ENCODE measurements at regions of chr5 and their contacts with region 1.

Region 1: DNA sequence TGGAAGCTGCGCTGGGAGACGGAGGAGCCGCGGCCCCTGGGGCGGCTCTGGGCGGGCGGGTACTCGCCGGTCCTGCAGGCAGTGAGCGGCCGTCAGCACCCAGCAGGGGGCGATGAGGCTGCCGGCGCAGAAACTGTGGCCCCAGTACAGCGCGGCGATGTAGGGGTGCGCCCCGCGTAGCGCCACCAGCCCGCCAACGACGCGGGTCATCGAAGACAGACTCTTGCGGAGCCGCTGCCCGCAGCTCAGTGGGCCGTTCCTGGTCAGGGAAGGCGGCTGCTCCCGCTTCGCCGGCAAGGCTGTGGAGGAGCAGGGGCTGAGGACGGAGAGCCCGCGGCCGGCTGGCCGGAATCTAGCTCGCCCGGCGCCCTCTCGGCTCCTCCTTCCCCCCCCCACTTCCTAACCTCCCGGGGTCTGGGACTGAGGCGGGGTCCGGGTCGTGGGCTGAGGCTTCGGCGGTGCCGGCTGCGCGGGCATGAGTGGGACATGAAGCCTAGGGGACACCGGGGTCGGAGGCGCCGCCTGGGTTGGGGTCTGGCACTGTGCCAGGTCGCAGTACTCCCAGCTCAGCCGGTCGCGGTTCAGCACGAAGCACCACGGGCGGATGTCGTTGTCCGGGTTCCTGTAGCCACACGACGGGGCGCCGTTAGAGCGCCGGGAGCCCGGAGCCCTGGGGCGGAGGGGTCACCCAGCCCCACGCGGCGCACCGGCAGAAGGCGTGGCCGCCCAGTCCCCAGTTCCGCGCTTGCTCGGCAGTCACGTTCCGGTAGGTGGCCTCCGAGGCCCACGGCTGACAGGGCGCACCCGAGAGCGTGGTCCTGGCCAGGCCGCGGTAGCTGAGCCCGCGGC is 3.6 kb upstream of the PFN3 start:
- DNase-seq: peak; percentile 70 to 92 (median 81)
- ATAC-seq: peak; percentile 78 to 81 (median 80)
- H3K4me3 ChIP-seq: peak overlapping the region; percentile 60
- H3K4me3 Mint-ChIP-seq: peak overlapping the region; percentile 75 to 85 (median 79)
- H3K27ac ChIP-seq: peak overlapping the region; percentile 54
- H3K27ac Mint-ChIP-seq: no peak overlapping the region
- H3K4me1 ChIP-seq: peaks cover 22 to 50% of the 10 kb centered on the region in 2 experiments
- H3K4me1 Mint-ChIP-seq: peaks cover 27 to 39% (median 32%) of the 10 kb centered on the region in 3 donors
- H3K27me3 ChIP-seq: peaks cover 7 to 20% of the 10 kb centered on the region in 2 experiments
- H3K27me3 Mint-ChIP-seq: no peaks in the 10 kb centered on the region

Region 2: DNA sequence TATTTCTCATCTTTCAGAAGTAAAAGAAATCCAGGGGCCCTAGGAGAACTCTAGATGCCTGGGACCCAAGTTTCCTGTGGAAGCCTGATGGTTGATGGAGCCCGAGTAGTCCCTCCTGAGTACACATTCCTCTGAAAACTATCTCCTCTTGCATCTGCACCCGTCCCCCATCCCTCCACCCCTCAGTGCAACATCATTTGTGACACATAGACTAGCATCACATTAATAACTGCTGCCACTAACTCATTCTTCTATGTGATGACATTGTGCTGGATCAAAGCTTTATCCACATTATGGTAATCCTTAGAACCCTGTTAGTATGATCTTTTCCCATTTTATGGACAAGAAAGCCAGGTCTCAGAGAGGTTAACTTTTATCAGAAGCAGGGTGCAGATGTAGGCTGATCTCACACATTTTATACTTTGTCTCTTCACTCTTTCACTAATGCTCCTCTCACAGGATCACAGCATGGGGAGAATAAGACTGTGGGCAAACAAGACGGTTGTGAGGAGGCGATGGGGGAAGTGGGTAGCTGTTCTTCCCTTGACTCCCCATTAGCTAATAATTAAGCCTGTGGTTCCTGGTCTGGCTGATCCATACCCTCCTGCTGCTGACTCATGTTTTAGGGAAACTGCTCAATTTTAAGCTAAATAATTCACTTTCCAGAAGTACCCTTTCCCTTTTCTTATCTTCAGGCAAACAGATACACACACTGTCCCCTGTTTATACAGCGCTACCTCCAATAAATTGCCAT is 500.9 kb before region 1 on chr5:
- CTCF ChIA-PET with region 1: no interaction called
- POLR2A ChIA-PET with region 1: no interaction called
- DNase-seq: no peak
- ATAC-seq: no peak
- H3K4me3 ChIP-seq: no peak overlapping the region
- H3K4me3 Mint-ChIP-seq: no peak overlapping the region
- H3K27ac ChIP-seq: no peak overlapping the region
- H3K27ac Mint-ChIP-seq: no peak overlapping the region
- H3K4me1 ChIP-seq: peaks cover 2 to 9% of the 10 kb centered on the region in 2 experiments
- H3K4me1 Mint-ChIP-seq: peaks cover 10 to 13% (median 12%) of the 10 kb centered on the region in 3 donors
- H3K27me3 ChIP-seq: no peaks in the 10 kb centered on the region
- H3K27me3 Mint-ChIP-seq: no peaks in the 10 kb centered on the region

Region 3: DNA sequence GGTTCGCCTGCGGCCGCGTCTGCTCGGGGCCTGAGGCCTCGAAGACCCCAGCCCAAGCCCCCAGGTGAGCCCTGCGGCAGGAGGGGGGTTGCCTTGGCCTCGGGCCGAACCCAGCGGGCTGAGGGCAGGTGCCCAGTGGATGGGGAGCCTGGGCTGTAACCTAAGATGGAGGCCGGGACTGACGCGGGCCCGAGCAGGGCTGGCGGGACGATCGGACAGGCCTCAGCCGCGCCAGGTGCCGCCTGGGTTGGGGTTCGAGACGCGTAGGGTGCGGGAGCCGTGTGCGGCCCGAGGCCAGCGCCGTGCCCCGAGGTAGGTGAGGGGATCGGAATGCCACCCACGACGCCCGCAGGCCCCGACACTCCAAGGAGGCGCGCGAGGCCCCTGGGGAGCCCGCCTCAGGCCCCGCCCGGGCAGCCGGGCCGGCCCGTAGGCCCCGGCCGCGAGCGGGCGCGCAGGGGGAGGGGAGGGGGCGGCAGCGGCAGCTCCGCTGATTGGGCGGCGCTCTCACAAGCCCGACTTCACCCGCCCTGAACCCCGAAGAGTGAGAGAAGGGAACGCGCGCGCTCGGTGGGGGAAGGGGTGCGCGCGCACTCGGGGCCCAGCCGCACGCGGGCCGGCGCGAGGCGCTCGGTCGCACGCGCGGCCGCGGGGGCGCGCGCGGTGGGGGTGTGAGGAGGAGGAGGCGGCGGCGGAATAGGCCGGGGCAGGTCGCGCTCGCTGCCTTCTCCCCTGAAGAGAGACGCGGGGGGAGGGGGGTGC is 270.7 kb before region 1 on chr5 and contains the start of gene NSD1:
- CTCF ChIA-PET with region 1: no interaction called
- POLR2A ChIA-PET with region 1: no interaction called
- DNase-seq: peak; percentile 81 to 96 (median 88)
- ATAC-seq: peak; percentile 69 to 77 (median 72)
- H3K4me3 ChIP-seq: peak within 1 kb of the TSS; percentile 63 to 66
- H3K4me3 Mint-ChIP-seq: peak within 1 kb of the TSS; percentile 84 to 85 (median 84)
- H3K27ac ChIP-seq: peak within 1 kb of the TSS; percentile 88
- H3K27ac Mint-ChIP-seq: peak within 1 kb of the TSS; percentile 89 to 91
- H3K4me1 ChIP-seq: peaks cover 36 to 52% of the 10 kb centered on the region in 2 experiments
- H3K4me1 Mint-ChIP-seq: peaks cover 58 to 67% (median 61%) of the 10 kb centered on the region in 3 donors
- H3K27me3 ChIP-seq: no peaks in the 10 kb centered on the region
- H3K27me3 Mint-ChIP-seq: no peaks in the 10 kb centered on the region
- total RNA-seq, gene NSD1: 89.5 to 113 (median 103) TPM

Region 4: GRCh38 chr5:177362610-177363507 is 41.2 kb before region 1 on chr5:
- CTCF ChIA-PET with region 1: no interaction called
- POLR2A ChIA-PET with region 1: no interaction called
- DNase-seq: peak; percentile 34 to 88 (median 56)
- ATAC-seq: peak; percentile 75 to 79 (median 79)
- H3K4me3 ChIP-seq: peak overlapping the region; percentile 54 to 56
- H3K4me3 Mint-ChIP-seq: peak overlapping the region; percentile 77 to 82 (median 80)
- H3K27ac ChIP-seq: peak overlapping the region; percentile 74
- H3K27ac Mint-ChIP-seq: peak overlapping the region; percentile 95 to 96
- H3K4me1 ChIP-seq: peaks cover 45 to 90% of the 10 kb centered on the region in 2 experiments
- H3K4me1 Mint-ChIP-seq: peaks cover 46 to 75% (median 68%) of the 10 kb centered on the region in 3 donors
- H3K27me3 ChIP-seq: no peaks in the 10 kb centered on the region
- H3K27me3 Mint-ChIP-seq: no peaks in the 10 kb centered on the region

Region 5: GRCh38 chr5:177425801-177426565 is 22.0 kb after region 1 on chr5:
- CTCF ChIA-PET with region 1: interaction called in 1 of 2 experiments, 37 read pairs
- POLR2A ChIA-PET with region 1: interaction called in 1 of 2 experiments, 13 read pairs
- DNase-seq: peak; percentile 98 to 100 (median 100)
- ATAC-seq: peak; percentile 80 to 82 (median 80)
- H3K4me3 ChIP-seq: peak overlapping the region; percentile 71 to 77
- H3K4me3 Mint-ChIP-seq: peak overlapping the region; percentile 79 to 92 (median 90)
- H3K27ac ChIP-seq: peak overlapping the region; percentile 87
- H3K27ac Mint-ChIP-seq: peak overlapping the region; percentile 99
- H3K4me1 ChIP-seq: peaks cover 32 to 61% of the 10 kb centered on the region in 2 experiments
- H3K4me1 Mint-ChIP-seq: peaks cover 49 to 56% (median 53%) of the 10 kb centered on the region in 3 donors
- H3K27me3 ChIP-seq: no peaks in the 10 kb centered on the region
- H3K27me3 Mint-ChIP-seq: no peaks in the 10 kb centered on the region

Region 6: GRCh38 chr5:177431317-177432142 is 27.5 kb after region 1 on chr5:
- CTCF ChIA-PET with region 1: interaction called in 1 of 2 experiments, 37 read pairs
- POLR2A ChIA-PET with region 1: interaction called in 1 of 2 experiments, 13 read pairs
- DNase-seq: peak in 34 of 35 experiments; percentile 54 to 85 (median 67)
- ATAC-seq: peak; percentile 29 to 49 (median 47)
- H3K4me3 ChIP-seq: peak overlapping the region; percentile 41 to 53
- H3K4me3 Mint-ChIP-seq: peak overlapping the region; percentile 79 to 92 (median 86)
- H3K27ac ChIP-seq: peak overlapping the region; percentile 84
- H3K27ac Mint-ChIP-seq: peak overlapping the region; percentile 95
- H3K4me1 ChIP-seq: peaks cover 64 to 95% of the 10 kb centered on the region in 2 experiments
- H3K4me1 Mint-ChIP-seq: peaks cover 61 to 84% (median 84%) of the 10 kb centered on the region in 3 donors
- H3K27me3 ChIP-seq: no peaks in the 10 kb centered on the region
- H3K27me3 Mint-ChIP-seq: no peaks in the 10 kb centered on the region

Region 7: GRCh38 chr5:177446200-177447065 is 42.4 kb after region 1 on chr5 and contains the start of gene PRR7:
- CTCF ChIA-PET with region 1: interaction called, 4 to 90 read pairs
- POLR2A ChIA-PET with region 1: no interaction called
- DNase-seq: peak; percentile 48 to 90 (median 72)
- ATAC-seq: peak; percentile 48 to 66 (median 64)
- H3K4me3 ChIP-seq: peak within 1 kb of the TSS; percentile 52 to 55
- H3K4me3 Mint-ChIP-seq: peak within 1 kb of the TSS; percentile 72 to 78 (median 72)
- H3K27ac ChIP-seq: peak within 1 kb of the TSS; percentile 87
- H3K27ac Mint-ChIP-seq: peak within 1 kb of the TSS; percentile 95
- H3K4me1 ChIP-seq: peaks cover 19 to 74% of the 10 kb centered on the region in 2 experiments
- H3K4me1 Mint-ChIP-seq: peaks cover 47 to 58% (median 53%) of the 10 kb centered on the region in 3 donors
- H3K27me3 ChIP-seq: peaks cover 0 to 2% of the 10 kb centered on the region in 2 experiments
- H3K27me3 Mint-ChIP-seq: no peaks in the 10 kb centered on the region
- total RNA-seq, gene PRR7: 9.5 to 28.2 (median 12.3) TPM

Region 8: DNA sequence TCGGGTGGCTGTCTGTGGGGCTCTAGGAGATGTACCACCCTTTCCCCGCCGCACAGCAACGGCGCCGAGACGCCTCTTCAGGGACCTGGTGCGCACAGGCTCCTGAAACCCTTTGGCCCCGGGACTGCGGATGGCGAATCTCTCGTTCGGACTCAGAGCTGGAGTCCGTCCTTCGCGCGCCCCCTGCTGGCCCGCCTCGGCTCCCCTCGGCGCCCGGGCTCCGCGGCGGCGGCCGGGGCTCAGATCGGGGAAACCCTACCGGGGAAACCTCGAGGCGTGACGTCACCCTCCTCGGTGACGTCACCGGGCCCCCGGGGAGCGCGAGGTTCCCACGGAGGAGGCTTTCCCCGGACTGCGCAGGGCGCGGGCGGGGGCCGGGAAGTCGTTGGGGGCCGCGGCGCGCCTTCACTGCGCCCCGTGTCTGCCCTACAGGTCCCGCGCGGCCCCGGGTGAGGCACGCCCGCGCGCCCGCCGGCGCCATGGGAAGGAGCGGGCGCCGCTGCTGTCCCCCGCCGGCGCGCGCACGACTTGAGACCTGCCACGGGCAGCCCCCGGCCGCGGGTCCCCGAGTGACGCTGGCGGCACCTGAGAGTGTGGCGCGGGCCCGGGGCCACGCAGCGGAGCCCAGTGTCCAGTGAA is 50.5 kb after region 1 on chr5:
- CTCF ChIA-PET with region 1: interaction called, 12 to 90 read pairs
- POLR2A ChIA-PET with region 1: interaction called, 3 to 4 read pairs
- DNase-seq: peak; percentile 84 to 97 (median 92)
- ATAC-seq: peak; percentile 51 to 64 (median 56)
- H3K4me3 ChIP-seq: peak overlapping the region; percentile 49 to 68
- H3K4me3 Mint-ChIP-seq: peak overlapping the region; percentile 81 to 85 (median 82)
- H3K27ac ChIP-seq: peak overlapping the region; percentile 97
- H3K27ac Mint-ChIP-seq: peak overlapping the region in 1 of 2 donors; percentile 58
- H3K4me1 ChIP-seq: peaks cover 0 to 49% of the 10 kb centered on the region in 2 experiments
- H3K4me1 Mint-ChIP-seq: peaks cover 23 to 32% (median 28%) of the 10 kb centered on the region in 3 donors
- H3K27me3 ChIP-seq: peaks cover 0 to 4% of the 10 kb centered on the region in 2 experiments
- H3K27me3 Mint-ChIP-seq: no peaks in the 10 kb centered on the region

Region 9: GRCh38 chr5:177497292-177498033 is 93.4 kb after region 1 on chr5 and contains the start of gene PDLIM7:
- CTCF ChIA-PET with region 1: interaction called in 1 of 2 experiments, 15 read pairs
- POLR2A ChIA-PET with region 1: no interaction called
- DNase-seq: peak; percentile 82 to 97 (median 89)
- ATAC-seq: peak; percentile 87 to 92 (median 90)
- H3K4me3 ChIP-seq: peak within 1 kb of the TSS; percentile 61 to 62
- H3K4me3 Mint-ChIP-seq: peak within 1 kb of the TSS; percentile 78 to 84 (median 84)
- H3K27ac ChIP-seq: no peak within 1 kb of the TSS
- H3K27ac Mint-ChIP-seq: no peak within 1 kb of the TSS
- H3K4me1 ChIP-seq: peaks cover 0 to 47% of the 10 kb centered on the region in 2 experiments
- H3K4me1 Mint-ChIP-seq: peaks cover 23 to 34% (median 25%) of the 10 kb centered on the region in 3 donors
- H3K27me3 ChIP-seq: peaks cover 0 to 6% of the 10 kb centered on the region in 2 experiments
- H3K27me3 Mint-ChIP-seq: no peaks in the 10 kb centered on the region
- total RNA-seq, gene PDLIM7: 9.8 to 17.8 (median 12.8) TPM